ENCODE measurements at regions of chr5 and their contacts with region 1.

Region 1: DNA sequence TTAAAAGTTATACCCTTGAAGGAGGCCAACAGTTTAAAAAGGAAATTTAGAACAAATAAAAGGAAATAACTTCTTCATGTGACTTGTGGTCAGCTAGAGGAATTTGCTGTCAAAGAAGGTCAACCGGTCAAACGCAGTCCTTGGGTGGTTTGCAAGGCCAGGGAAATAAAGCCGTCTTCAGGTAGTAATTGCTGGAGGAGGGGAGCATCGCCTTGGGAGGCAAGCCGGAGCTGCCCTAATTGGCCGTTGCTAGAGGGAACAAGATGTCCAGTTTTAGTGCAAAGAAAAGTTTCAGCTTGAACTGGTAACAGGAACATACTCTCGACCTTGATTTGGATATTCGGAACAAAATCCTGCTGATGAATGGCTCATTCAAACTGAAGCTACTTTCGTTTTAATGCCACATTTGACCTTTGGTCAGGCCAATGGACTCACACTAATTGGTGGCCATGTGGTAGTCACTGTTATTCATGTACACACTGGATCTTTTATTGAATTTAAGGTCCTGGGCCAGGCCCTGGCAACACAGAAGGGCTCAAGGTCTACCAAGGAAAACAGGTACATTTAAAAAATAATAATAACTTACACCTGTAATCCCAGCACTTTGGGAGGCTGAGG is 47.0 kb upstream of the MYO10 start:
- DNase-seq: peak in 1 of 2 experiments; percentile 66
- H3K4me3 ChIP-seq: no peak overlapping the region
- H3K27ac ChIP-seq: no peak overlapping the region
- H3K4me1 ChIP-seq: peaks cover 12% of the 10 kb centered on the region; the same call in 1 of the 2 replicates
- H3K27me3 ChIP-seq: no peaks in the 10 kb centered on the region
- CTCF ChIP-seq: no peak

Region 2: GRCh38 chr5:16736158-16736995 is 246.8 kb before region 1 on chr5:
- CTCF ChIA-PET with region 1: no interaction called
- POLR2A ChIA-PET with region 1: no interaction called
- intact Hi-C with region 1: no loop called
- DNase-seq: peak; percentile 94 to 96
- H3K4me3 ChIP-seq: peak overlapping the region; percentile 27; the same call in 1 of the 2 replicates
- H3K27ac ChIP-seq: peak overlapping the region; percentile 97
- H3K4me1 ChIP-seq: peaks cover 28% of the 10 kb centered on the region
- H3K27me3 ChIP-seq: no peaks in the 10 kb centered on the region
- CTCF ChIP-seq: no peak

Region 3: DNA sequence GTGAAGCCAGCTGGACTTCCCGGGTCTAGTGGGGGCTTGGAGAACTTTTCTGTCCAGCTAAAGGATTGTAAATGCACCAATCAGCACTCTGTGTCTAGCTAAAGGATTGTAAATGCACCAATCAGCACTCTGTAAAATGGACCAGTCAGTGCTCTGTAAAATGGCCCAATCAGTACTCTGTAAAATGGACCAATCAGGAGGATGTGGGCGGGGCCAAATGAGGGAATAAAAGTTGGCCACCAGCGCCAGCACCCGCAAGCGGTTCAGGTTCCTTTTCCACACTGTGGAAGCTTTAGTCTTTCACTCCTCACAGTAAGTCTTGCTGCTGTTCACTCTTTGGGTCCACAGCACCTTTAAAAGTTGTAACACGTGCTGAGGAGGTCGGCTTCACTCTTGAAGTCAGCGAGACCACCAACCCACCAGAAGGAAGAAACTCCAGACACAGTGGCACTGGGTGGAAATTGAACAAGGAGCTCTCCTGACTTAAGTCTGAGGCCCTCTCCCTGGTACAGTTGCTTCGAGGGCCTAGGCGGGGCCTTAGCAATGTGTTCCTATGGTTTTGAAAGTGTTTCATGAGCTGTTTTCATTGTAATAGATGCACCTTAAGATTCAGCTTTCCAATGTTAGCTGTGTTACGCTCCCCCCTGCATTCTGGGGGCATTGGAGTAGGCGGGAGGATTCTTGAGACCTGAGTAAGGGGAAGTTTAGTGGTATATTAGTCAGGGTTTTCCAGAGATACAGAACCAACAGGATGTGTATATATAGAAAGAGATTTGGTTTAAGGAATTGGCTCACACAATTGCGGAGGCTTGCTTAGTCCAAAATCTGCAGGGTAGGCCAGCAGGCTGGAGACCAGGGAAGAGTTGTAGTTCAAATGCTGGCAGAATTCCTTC is 25.6 kb before region 1 on chr5:
- CTCF ChIA-PET with region 1: no interaction called
- POLR2A ChIA-PET with region 1: interaction called, 12 read pairs
- intact Hi-C with region 1: no loop called
- DNase-seq: no peak
- H3K4me3 ChIP-seq: no peak overlapping the region
- H3K27ac ChIP-seq: no peak overlapping the region
- H3K4me1 ChIP-seq: no peaks in the 10 kb centered on the region
- H3K27me3 ChIP-seq: no peaks in the 10 kb centered on the region
- CTCF ChIP-seq: no peak

Measured in PC-9 (cell line).